Prostate gland (tissue), 2 donors: ENCODE measurements at regions of chr13 and their contacts with region 1.

Region 1: GRCh38 chr13:47869780-47870179 is 131.3 kb downstream of the SUCLA2 start:
- DNase-seq: no peak
- H3K4me3 ChIP-seq: no peak overlapping the region
- H3K27ac ChIP-seq: no peak overlapping the region
- H3K4me1 ChIP-seq: no peaks in the 10 kb centered on the region
- H3K27me3 ChIP-seq: no peaks in the 10 kb centered on the region
- CTCF ChIP-seq: no peak
- POLR2A ChIP-seq: no peak

Region 2: GRCh38 chr13:47890146-47890814 is 20.5 kb after region 1 on chr13:
- intact Hi-C with region 1: loop called (anchors 1 kb)
- DNase-seq: no peak
- H3K4me3 ChIP-seq: no peak overlapping the region
- H3K27ac ChIP-seq: no peak overlapping the region
- H3K4me1 ChIP-seq: no peaks in the 10 kb centered on the region
- H3K27me3 ChIP-seq: no peaks in the 10 kb centered on the region
- CTCF ChIP-seq: no peak
- POLR2A ChIP-seq: no peak

Region 3: DNA sequence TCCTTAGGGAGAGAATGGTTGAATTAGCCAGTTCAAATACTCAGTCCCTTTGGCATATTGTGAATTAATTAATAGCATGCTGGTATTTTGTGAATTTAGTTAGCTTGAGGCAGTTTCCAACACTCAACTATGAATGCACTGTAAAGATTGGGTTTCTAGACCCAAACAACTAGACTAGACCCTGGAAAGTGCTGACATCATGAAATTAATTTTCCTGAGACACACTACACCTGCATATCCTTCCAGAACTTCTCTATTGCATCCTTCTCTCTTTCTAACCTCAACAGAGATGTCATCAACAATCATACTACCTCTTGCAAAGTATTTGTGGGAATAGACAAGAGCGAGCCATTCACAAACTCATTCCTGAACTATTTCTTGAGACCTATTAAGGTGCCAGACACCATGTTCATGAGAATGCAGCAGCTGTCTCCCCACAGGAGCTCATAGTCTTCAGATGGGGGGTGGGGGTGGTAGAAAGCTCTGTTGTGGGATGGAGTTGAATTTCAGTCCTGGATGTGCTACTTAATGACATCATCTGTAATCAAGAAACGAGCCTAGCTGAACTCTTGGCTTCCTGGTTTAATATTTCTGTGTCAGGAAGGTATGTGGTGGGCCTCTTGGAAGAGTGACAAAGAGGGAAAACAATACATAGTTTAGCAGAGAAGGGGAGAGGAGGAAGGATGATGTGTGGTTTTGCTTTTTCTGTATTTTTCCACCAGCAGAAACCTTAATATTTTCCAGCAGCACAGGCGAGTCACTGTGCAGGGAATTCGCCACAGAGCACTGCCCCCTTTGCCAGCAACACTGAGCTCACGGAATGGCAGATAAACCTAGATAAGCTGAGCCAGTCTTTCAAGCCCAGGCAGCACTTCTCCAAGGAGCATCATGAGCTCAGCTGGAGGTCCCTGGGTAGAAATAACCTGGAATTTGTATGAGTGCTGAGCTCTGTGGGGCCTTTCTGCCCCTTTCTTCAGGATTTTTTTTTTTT is 730.9 kb after region 1 on chr13:
- intact Hi-C with region 1: no loop called
- DNase-seq: no peak
- H3K4me3 ChIP-seq: no peak overlapping the region
- H3K27ac ChIP-seq: no peak overlapping the region
- H3K4me1 ChIP-seq: no peaks in the 10 kb centered on the region
- H3K27me3 ChIP-seq: no peaks in the 10 kb centered on the region
- CTCF ChIP-seq: no peak
- POLR2A ChIP-seq: no peak